WTC11 (cell line): ENCODE measurements at regions of chr1 and their contacts with region 1.

Region 1: DNA sequence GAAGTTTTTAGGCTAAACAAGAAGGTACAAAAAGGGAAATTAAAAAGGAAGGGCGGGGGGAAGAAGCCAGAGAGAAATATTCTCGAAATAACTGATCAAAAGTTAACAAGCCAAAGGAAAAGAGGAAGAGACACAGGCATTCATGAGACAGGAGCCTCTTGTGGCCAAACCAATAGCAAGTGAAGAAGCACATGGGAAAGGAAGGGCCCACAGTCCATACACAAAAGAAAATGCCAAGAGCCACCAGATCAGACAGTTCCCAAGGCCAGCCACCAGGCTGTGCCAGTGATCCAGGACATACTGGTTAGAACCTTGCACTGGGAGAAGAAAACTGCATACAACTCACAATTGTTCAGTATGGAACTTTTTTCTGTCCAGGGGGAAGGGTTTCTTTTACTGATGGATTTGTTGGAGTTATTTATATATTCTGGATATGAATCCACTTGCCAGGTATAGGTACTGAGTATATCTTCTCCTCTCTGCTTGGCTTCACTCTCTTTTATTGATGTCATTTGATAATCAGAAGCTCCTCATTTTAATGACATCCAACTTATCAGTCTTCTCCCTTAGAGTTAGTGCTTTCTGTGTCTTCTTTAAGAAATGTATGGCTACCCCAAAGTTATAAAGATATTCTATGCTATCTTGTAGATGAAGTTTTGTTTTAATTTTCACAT is 76.8 kb downstream of the CD46 start:
- DNase-seq: peak; percentile 70
- ATAC-seq: peak; percentile 95
- H3K4me3 Mint-ChIP-seq: no peak overlapping the region
- H3K27ac Mint-ChIP-seq: no peak overlapping the region
- H3K4me1 Mint-ChIP-seq: peaks cover 7% of the 10 kb centered on the region
- H3K27me3 Mint-ChIP-seq: no peaks in the 10 kb centered on the region
- CTCF ChIP-seq: peak; percentile 45; the same call in 1 of the 2 replicates

Region 2: DNA sequence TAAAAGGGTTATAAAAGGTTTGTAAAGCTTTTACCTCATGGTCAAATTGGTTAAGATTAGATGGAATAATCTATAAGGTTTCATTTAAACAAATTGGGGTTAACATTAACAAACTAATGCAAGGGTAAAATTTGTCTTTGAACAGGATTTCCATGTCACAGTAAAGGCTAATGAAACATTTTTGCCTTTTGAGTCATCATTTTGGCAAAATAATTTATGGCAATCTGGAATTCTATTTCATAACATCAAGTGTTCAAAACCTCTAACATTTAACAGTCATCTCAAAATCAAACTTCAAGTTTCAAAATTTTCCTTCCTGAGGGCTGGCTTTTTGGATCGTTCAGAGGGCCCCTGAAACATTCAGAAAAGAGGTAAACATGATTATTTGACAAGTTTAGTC is 83.3 kb before region 1 on chr1:
- CTCF ChIA-PET with region 1: no interaction called
- POLR2A ChIA-PET with region 1: no interaction called
- DNase-seq: no peak
- ATAC-seq: no peak
- H3K4me3 Mint-ChIP-seq: no peak overlapping the region
- H3K27ac Mint-ChIP-seq: no peak overlapping the region
- H3K4me1 Mint-ChIP-seq: peaks cover 54% of the 10 kb centered on the region
- H3K27me3 Mint-ChIP-seq: peaks cover 6% of the 10 kb centered on the region
- CTCF ChIP-seq: no peak

Region 3: DNA sequence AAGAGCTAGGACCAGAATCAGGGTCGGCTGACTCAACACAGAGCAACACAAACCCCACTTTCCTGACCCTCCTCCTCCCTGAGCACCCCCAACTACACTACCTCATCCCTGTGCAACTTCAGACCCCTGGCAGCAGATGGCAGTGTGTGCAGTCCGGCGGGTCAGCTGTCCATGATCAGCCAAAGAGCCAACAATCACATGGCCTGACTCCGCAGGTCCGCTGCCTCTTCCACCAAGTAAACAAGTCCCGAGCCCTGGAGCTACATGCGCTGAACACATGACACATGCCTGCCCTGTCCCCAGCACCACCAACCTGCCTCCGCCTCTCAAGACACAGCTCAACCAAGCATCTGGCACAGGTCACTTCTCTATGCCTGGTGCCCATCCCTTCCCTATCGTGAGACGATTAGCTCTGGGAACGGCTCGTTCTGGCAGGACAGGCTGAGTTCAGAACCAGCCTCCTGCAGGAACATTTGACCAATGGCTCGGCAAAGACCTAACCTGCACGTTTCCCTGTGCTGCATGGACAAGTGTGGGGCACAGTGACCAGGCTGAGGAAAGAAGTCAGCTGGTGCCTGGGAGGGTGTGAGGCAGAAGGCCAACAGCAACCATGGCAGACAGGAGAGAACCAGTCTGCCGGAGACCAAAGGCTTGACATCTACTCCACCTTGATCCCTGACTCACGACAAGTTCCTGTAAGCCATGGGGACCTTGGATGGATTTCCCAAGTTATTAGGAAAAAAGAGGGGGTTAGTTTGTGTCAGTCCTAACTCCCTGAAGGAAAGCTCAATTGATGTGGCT is 16.5 kb before region 1 on chr1:
- CTCF ChIA-PET with region 1: interaction called, 26 read pairs
- POLR2A ChIA-PET with region 1: no interaction called
- DNase-seq: peak; percentile 55
- ATAC-seq: peak; percentile 88
- H3K4me3 Mint-ChIP-seq: no peak overlapping the region
- H3K27ac Mint-ChIP-seq: no peak overlapping the region
- H3K4me1 Mint-ChIP-seq: peaks cover 10% of the 10 kb centered on the region
- H3K27me3 Mint-ChIP-seq: no peaks in the 10 kb centered on the region
- CTCF ChIP-seq: no peak

Region 4: GRCh38 chr1:207868774-207869721 is 40.4 kb after region 1 on chr1:
- CTCF ChIA-PET with region 1: interaction called, 66 read pairs
- POLR2A ChIA-PET with region 1: no interaction called
- DNase-seq: peak; percentile 72
- ATAC-seq: peak; percentile 65
- H3K4me3 Mint-ChIP-seq: peak overlapping the region; percentile 71
- H3K27ac Mint-ChIP-seq: no peak overlapping the region
- H3K4me1 Mint-ChIP-seq: peaks cover 18% of the 10 kb centered on the region
- H3K27me3 Mint-ChIP-seq: peaks cover 28% of the 10 kb centered on the region
- CTCF ChIP-seq: peak; percentile 60

Region 5: GRCh38 chr1:207876131-207876530 is 47.5 kb after region 1 on chr1:
- CTCF ChIA-PET with region 1: interaction called, 24 read pairs
- POLR2A ChIA-PET with region 1: no interaction called
- DNase-seq: peak; percentile 32
- ATAC-seq: peak; percentile 90
- H3K4me3 Mint-ChIP-seq: no peak overlapping the region
- H3K27ac Mint-ChIP-seq: no peak overlapping the region
- H3K4me1 Mint-ChIP-seq: peaks cover 7% of the 10 kb centered on the region
- H3K27me3 Mint-ChIP-seq: peaks cover 2% of the 10 kb centered on the region
- CTCF ChIP-seq: no peak

Region 6: GRCh38 chr1:207903767-207904166 is 75.1 kb after region 1 on chr1:
- CTCF ChIA-PET with region 1: no interaction called
- POLR2A ChIA-PET with region 1: no interaction called
- DNase-seq: no peak
- ATAC-seq: no peak
- H3K4me3 Mint-ChIP-seq: no peak overlapping the region
- H3K27ac Mint-ChIP-seq: no peak overlapping the region
- H3K4me1 Mint-ChIP-seq: peaks cover 8% of the 10 kb centered on the region
- H3K27me3 Mint-ChIP-seq: peaks cover 2% of the 10 kb centered on the region; the same call in 1 of the 2 replicates
- CTCF ChIP-seq: no peak